CD4-positive, alpha-beta T cell (primary cell): ENCODE measurements at regions of chr20 and their contacts with region 1.

Region 1: DNA sequence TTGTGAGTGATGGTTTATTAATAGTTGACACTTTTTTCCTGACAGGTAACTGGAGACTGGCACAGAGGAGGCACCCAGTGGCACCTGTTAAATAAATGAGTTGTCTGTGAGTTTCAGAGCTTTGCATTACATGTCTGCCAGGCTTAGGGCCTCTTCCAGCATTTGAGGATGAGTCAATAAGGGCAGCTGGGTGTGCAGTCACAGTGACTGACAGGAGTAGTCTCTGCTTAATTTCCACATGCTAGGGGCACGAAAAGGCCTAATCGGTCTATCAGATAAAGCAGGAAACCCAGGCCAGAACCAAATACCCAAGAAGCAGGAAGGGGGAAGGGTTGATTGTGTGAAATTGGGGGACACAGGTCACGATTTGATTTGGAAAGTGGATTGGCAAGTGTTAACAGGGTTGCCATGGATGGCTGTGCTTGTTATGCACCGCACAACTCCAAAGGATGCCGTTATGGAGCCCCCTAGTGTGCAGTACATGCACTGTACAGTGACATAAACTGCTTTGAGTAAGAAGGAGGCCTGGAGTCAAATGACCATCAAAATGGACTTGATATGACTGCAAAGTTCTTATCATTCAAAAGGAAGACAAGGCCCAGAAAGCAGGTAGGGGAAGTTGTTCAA is 111.9 kb upstream of the GGTLC1 start:
- DNase-seq: peak; percentile 17 to 79 (median 54)
- ATAC-seq: peak; percentile 96
- H3K4me3 ChIP-seq: no peak overlapping the region
- H3K4me3 Mint-ChIP-seq: no peak overlapping the region
- H3K27ac ChIP-seq: no peak overlapping the region
- H3K27ac Mint-ChIP-seq: no peak overlapping the region
- H3K4me1 ChIP-seq: peaks cover 5% of the 10 kb centered on the region
- H3K4me1 Mint-ChIP-seq: no peaks in the 10 kb centered on the region
- H3K27me3 ChIP-seq: no peaks in the 10 kb centered on the region
- H3K27me3 Mint-ChIP-seq: peaks cover 5% of the 10 kb centered on the region
- CTCF ChIP-seq: peak; percentile 80

Region 2: GRCh38 chr20:22962557-22963438 is 1137.7 kb before region 1 on chr20:
- CTCF ChIA-PET with region 1: no interaction called
- POLR2A ChIA-PET with region 1: no interaction called
- intact Hi-C with region 1: no loop called
- DNase-seq: no peak
- ATAC-seq: no peak
- H3K4me3 ChIP-seq: no peak overlapping the region
- H3K4me3 Mint-ChIP-seq: no peak overlapping the region
- H3K27ac ChIP-seq: no peak overlapping the region
- H3K27ac Mint-ChIP-seq: no peak overlapping the region
- H3K4me1 ChIP-seq: no peaks in the 10 kb centered on the region
- H3K4me1 Mint-ChIP-seq: no peaks in the 10 kb centered on the region
- H3K27me3 ChIP-seq: peaks cover 0 to 7% of the 10 kb centered on the region in 2 experiments
- H3K27me3 Mint-ChIP-seq: peaks cover 4% of the 10 kb centered on the region
- CTCF ChIP-seq: no peak

Region 3: GRCh38 chr20:23794841-23795240 is 305.7 kb before region 1 on chr20:
- CTCF ChIA-PET with region 1: no interaction called
- POLR2A ChIA-PET with region 1: no interaction called
- intact Hi-C with region 1: loop called in 1 of 2 experiments (anchors 10 kb)
- DNase-seq: no peak
- ATAC-seq: no peak
- H3K4me3 ChIP-seq: no peak overlapping the region
- H3K4me3 Mint-ChIP-seq: no peak overlapping the region
- H3K27ac ChIP-seq: no peak overlapping the region
- H3K27ac Mint-ChIP-seq: no peak overlapping the region
- H3K4me1 ChIP-seq: no peaks in the 10 kb centered on the region
- H3K4me1 Mint-ChIP-seq: no peaks in the 10 kb centered on the region
- H3K27me3 ChIP-seq: no peaks in the 10 kb centered on the region
- H3K27me3 Mint-ChIP-seq: peaks cover 12% of the 10 kb centered on the region
- CTCF ChIP-seq: no peak

Region 4: DNA sequence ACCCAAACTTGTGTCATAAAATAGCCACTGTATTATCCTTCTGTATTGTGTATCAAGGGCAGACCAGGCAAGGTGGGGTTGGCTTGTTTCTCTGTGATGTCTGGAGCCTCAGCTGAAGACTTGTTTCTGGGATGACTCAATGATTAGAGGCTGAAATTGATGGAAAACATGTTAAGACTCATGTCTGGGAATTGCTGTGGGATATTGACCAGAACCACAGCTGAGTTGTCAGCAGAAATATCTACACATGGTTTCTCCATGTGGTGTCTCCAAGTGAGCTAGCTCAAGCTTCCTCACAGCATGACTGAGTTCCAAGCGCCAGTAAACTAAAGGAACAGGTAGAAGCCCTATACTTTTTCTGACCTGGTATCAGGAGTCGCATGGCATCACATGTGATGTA is 240.4 kb after region 1 on chr20:
- CTCF ChIA-PET with region 1: no interaction called
- POLR2A ChIA-PET with region 1: no interaction called
- intact Hi-C with region 1: no loop called
- DNase-seq: no peak
- ATAC-seq: no peak
- H3K4me3 ChIP-seq: no peak overlapping the region
- H3K4me3 Mint-ChIP-seq: no peak overlapping the region
- H3K27ac ChIP-seq: no peak overlapping the region
- H3K27ac Mint-ChIP-seq: no peak overlapping the region
- H3K4me1 ChIP-seq: no peaks in the 10 kb centered on the region
- H3K4me1 Mint-ChIP-seq: peaks cover 5% of the 10 kb centered on the region
- H3K27me3 ChIP-seq: no peaks in the 10 kb centered on the region
- H3K27me3 Mint-ChIP-seq: no peaks in the 10 kb centered on the region
- CTCF ChIP-seq: no peak

Region 5: DNA sequence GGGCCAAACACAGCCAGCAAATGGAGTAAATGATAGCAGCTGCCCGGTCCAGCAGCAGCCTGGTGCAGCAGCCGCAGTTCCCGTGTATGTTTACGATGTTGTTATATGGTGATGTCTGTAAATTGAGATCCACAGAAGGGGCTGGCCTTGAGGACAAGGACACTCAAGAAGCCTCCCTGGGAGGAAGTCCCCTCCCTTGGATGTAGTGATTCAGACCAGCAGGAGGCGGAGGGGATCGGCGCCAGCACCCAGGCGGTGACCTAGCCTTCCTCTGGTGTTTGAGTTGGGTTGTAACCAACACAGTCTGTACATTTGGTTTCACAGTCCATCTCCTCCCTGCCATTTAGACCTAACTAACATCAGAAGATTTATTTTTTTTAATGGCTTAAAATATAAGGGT is 556.7 kb after region 1 on chr20:
- CTCF ChIA-PET with region 1: no interaction called
- POLR2A ChIA-PET with region 1: no interaction called
- intact Hi-C with region 1: no loop called
- DNase-seq: no peak
- ATAC-seq: no peak
- H3K4me3 ChIP-seq: no peak overlapping the region
- H3K4me3 Mint-ChIP-seq: no peak overlapping the region
- H3K27ac ChIP-seq: no peak overlapping the region
- H3K27ac Mint-ChIP-seq: no peak overlapping the region
- H3K4me1 ChIP-seq: no peaks in the 10 kb centered on the region
- H3K4me1 Mint-ChIP-seq: no peaks in the 10 kb centered on the region
- H3K27me3 ChIP-seq: no peaks in the 10 kb centered on the region
- H3K27me3 Mint-ChIP-seq: no peaks in the 10 kb centered on the region
- CTCF ChIP-seq: no peak